WTC11 (cell line): ENCODE measurements at regions of chr2 and their contacts with region 1.

Region 1: GRCh38 chr2:131154071-131154531 is 49.0 kb downstream of the PLEKHB2 start:
- DNase-seq: peak; percentile 75
- ATAC-seq: peak; percentile 92
- H3K4me3 Mint-ChIP-seq: no peak overlapping the region
- H3K27ac Mint-ChIP-seq: no peak overlapping the region
- H3K4me1 Mint-ChIP-seq: peaks cover 11% of the 10 kb centered on the region
- H3K27me3 Mint-ChIP-seq: no peaks in the 10 kb centered on the region; the same call in 1 of the 2 replicates
- CTCF ChIP-seq: peak; percentile 80

Region 2: DNA sequence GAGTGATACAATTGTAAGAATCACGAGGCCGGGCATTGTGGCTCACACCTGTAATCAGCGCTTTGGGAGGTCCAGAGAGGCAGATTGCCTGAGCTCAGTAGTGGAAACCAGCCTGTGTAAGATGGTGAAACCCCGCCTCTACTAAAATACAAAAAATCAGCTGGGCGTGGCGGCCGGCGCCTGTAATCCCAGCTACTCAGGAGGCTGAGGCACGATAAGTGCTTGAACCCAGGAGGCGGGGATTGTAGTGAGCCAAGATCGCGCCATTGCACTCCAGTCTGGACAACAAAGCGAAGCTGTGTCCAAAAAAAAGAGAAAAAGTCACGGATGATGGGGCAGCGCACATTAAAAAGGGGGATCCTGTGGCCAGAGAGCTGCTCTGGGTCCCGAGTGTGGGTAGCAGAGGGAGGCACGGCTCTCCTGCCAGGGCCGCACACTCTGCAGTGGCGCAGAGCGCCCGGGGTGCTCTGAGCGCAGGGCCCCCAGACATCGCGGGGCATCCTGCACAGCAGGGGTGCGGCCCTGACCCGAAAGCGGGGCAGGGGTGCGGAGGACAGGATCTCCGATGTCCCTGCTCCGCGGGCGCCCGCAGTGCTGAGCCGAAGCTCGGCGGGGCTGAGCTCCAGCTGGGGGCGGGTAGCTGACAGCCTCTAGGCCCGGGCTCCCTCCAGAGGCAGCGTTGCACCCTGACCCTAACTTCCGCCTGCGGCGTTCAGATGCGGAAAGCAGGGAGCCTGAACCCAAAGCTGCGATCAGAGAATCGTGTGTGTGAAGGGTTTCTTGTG is 240.2 kb after region 1 on chr2:
- CTCF ChIA-PET with region 1: interaction called, 21 read pairs
- POLR2A ChIA-PET with region 1: no interaction called
- DNase-seq: peak; percentile 63
- ATAC-seq: peak; percentile 73
- H3K4me3 Mint-ChIP-seq: peak overlapping the region; percentile 77
- H3K27ac Mint-ChIP-seq: no peak overlapping the region
- H3K4me1 Mint-ChIP-seq: peaks cover 12% of the 10 kb centered on the region
- H3K27me3 Mint-ChIP-seq: peaks cover 34% of the 10 kb centered on the region
- CTCF ChIP-seq: no peak

Region 3: GRCh38 chr2:131413148-131413747 is 259.1 kb after region 1 on chr2:
- CTCF ChIA-PET with region 1: interaction called, 11 read pairs
- POLR2A ChIA-PET with region 1: no interaction called
- DNase-seq: no peak
- ATAC-seq: peak; percentile 66
- H3K4me3 Mint-ChIP-seq: no peak overlapping the region
- H3K27ac Mint-ChIP-seq: no peak overlapping the region
- H3K4me1 Mint-ChIP-seq: no peaks in the 10 kb centered on the region; the same call in 1 of the 2 replicates
- H3K27me3 Mint-ChIP-seq: no peaks in the 10 kb centered on the region
- CTCF ChIP-seq: peak; percentile 59

Region 4: DNA sequence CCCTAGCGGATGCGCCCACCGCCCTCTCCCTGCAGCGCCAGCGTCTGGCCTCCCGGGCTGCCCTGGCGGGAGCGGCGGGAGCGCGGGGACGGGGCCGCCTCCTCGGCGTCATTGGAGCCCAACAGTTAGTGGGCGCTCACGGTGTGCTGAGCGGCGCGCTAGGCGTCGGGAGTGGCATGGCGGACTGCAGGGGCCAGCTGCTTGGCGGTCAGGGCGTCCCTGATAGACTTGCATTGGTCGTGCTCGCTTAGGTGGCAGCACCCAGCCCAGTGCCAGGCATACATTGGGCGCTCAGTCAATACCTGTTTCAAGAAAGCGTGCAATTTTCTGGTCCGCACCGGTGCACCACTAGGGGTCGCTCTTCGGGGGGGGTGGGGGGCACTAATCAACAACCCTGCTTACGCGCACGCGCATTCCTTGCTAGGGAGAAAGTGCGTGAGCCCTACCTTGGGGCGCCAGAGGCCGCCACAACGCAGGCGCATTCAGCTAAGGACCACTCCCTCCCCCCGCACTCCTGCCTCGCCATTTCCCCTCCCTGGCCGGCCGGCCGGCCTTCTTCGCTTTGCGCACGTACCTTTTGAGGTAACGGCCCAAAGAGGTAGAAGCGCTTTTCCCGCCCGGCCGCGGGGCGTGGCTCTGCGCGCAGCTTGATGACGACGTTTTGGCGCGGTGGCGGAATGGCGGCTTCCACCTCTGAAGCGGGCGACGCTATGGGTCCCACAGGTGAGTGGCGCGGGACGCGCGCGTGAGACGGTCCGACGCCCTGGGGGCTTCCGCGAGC is 338.5 kb after region 1 on chr2:
- CTCF ChIA-PET with region 1: interaction called, 10 read pairs
- POLR2A ChIA-PET with region 1: no interaction called
- DNase-seq: peak; percentile 94
- ATAC-seq: peak; percentile 78
- H3K4me3 Mint-ChIP-seq: peak overlapping the region; percentile 96
- H3K27ac Mint-ChIP-seq: peak overlapping the region; percentile 85; the same call in 1 of the 2 replicates
- H3K4me1 Mint-ChIP-seq: peaks cover 15% of the 10 kb centered on the region
- H3K27me3 Mint-ChIP-seq: no peaks in the 10 kb centered on the region
- CTCF ChIP-seq: peak; percentile 75

Region 5: GRCh38 chr2:131673392-131674173 is 519.5 kb after region 1 on chr2:
- CTCF ChIA-PET with region 1: interaction called, 27 read pairs
- POLR2A ChIA-PET with region 1: no interaction called
- DNase-seq: peak; percentile 80
- ATAC-seq: peak; percentile 81
- H3K4me3 Mint-ChIP-seq: peak overlapping the region; percentile 66
- H3K27ac Mint-ChIP-seq: no peak overlapping the region
- H3K4me1 Mint-ChIP-seq: no peaks in the 10 kb centered on the region; the same call in 1 of the 2 replicates
- H3K27me3 Mint-ChIP-seq: peaks cover 44% of the 10 kb centered on the region
- CTCF ChIP-seq: peak; percentile 75; the same call in 1 of the 2 replicates